Common myeloid progenitor, CD34-positive (primary cell): ENCODE measurements at regions of chr19 and their contacts with region 1.

Region 1: DNA sequence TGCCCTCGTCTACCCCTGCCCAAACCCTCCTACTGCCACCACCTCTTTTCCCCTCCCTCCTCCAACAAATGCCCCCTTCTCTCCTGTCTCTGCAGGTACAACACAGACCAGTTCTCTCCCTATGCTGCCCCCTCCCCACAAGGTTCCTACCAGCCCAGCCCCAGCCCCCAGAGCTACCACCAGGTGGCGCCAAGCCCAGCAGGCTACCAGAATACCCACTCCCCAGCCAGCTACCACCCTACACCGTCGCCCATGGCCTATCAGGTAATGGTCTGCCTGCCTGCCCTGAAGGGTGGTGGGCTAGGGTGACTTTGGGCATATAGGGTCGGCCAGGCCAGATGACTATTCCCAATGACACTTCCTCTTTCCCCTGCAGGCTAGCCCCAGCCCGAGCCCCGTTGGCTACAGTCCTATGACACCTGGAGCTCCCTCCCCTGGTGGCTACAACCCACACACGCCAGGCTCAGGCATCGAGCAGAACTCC is 6.5 kb upstream of the TIMM50 start:
- DNase-seq: peak; percentile 62 to 77 (median 72)
- H3K4me3 ChIP-seq: no peak overlapping the region
- H3K27ac ChIP-seq: no peak overlapping the region
- H3K4me1 ChIP-seq: no peaks in the 10 kb centered on the region
- H3K27me3 ChIP-seq: no peaks in the 10 kb centered on the region

Region 2: GRCh38 chr19:39246951-39247669 is 227.1 kb before region 1 on chr19:
- CTCF ChIA-PET with region 1: no interaction called
- POLR2A ChIA-PET with region 1: no interaction called
- DNase-seq: peak in 2 of 3 donors; percentile 56 to 67
- H3K4me3 ChIP-seq: peak overlapping the region in 2 of 7 experiments; percentile 16 to 48
- H3K27ac ChIP-seq: no peak overlapping the region
- H3K4me1 ChIP-seq: peaks cover 0 to 41% (median 25%) of the 10 kb centered on the region in 4 experiments
- H3K27me3 ChIP-seq: peaks cover 0 to 2% (median 0%) of the 10 kb centered on the region in 5 experiments

Region 3: DNA sequence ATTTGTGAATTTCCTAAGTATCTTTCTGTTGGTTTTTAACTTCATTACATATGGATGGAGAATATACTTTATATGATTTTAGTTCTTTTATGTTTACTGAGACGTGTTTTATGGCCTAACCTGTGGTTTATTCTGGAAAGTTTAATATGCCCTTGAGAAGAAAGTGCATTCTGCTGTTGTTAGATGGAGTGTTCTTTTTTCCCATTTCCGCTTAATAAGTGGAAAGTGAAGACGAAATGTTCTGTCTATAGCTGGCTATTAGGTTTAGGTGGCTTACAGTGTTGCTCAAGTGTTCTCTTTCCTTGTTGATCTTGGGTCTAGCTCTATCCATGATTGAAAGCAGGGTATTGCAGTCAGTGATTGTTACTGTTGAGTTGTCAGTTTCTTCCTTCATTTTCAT is 10.8 kb before region 1 on chr19:
- CTCF ChIA-PET with region 1: interaction called, 15 read pairs
- POLR2A ChIA-PET with region 1: no interaction called
- DNase-seq: no peak
- H3K4me3 ChIP-seq: no peak overlapping the region
- H3K27ac ChIP-seq: no peak overlapping the region
- H3K4me1 ChIP-seq: no peaks in the 10 kb centered on the region
- H3K27me3 ChIP-seq: no peaks in the 10 kb centered on the region

Region 4: DNA sequence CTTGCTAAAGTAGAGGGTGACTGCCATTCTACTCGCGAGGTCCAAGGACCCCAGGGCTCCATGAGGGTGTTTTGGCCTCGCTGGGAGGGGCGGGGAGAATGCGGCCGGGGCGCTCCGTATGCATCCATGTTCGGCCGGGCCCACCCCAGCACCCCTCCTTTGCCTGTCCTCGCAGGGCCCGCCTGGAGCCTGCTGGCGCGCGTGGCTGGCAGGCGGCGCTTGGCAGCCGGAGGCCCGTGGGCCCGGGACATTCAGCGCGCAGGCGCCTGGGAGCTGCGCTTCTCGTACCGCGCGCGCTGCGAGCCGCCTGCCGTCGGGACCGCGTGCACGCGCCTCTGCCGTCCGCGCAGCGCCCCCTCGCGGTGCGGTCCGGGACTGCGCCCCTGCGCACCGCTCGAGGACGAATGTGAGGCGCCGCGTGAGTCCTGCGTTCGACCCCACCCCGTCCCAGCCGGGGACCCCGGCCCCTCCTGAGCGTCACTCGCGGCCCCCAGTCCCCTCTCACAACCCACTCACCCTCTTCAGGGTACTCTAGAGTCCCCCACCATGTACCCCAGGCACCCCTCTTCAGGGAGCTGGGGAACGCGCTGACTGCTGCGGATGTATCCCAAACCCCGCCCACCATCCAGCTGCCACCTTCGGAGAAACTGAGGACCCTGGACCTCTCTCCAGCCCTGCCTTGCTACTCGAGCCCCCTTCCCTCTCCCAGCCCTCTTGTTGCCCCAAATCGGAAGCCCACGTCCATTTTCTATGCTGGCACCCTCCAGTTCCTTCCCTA is 28.6 kb after region 1 on chr19:
- CTCF ChIA-PET with region 1: interaction called, 11 read pairs
- POLR2A ChIA-PET with region 1: no interaction called
- DNase-seq: peak; percentile 88 to 93 (median 93)
- H3K4me3 ChIP-seq: no peak overlapping the region
- H3K27ac ChIP-seq: no peak overlapping the region
- H3K4me1 ChIP-seq: peaks cover 0 to 31% (median 20%) of the 10 kb centered on the region in 4 experiments
- H3K27me3 ChIP-seq: peaks cover 4 to 96% (median 31%) of the 10 kb centered on the region in 5 experiments

Region 5: DNA sequence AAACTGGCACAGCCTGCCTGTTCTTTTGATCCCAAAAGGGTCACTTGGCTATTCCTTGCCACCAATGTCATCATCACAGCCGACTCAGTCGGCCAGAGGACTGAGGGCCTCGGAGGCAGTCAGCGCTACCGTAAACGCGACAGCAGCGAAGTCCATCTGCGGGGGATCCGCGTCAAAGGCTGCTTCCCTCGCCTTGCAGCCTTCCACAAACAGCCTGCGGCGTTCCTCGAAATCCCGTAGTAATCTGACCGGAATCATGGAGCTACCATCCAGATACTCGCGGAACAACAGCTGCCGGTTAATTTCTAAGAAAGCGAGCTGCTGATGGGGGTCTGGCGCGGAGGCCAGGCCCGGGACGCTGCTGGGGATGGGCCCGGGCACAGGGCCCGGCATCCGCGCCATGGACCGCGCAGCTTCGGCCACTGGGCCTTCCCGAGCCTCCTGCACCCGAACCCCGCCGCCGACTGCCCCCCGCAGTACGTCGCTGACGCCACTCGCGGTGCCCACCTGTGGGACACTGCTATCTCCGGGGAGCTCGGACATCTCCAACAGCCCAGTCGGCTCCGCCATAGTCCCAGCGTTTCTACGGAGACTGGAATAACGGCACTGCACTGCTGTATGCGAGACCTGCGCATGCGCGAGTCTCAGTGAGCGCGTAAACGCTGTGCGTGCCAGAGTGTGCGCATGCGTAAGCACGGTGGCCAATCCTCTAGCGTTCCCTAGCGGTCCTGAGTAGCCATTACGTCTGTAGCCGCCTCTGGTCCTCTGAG is 58.2 kb after region 1 on chr19 and contains the start of gene EID2B:
- CTCF ChIA-PET with region 1: interaction called, 46 read pairs
- POLR2A ChIA-PET with region 1: interaction called, 7 read pairs
- DNase-seq: peak; percentile 94 to 98 (median 95)
- H3K4me3 ChIP-seq: peak within 1 kb of the TSS; percentile 71 to 95 (median 87)
- H3K27ac ChIP-seq: peak within 1 kb of the TSS; percentile 70 to 85
- H3K4me1 ChIP-seq: peaks cover 3 to 11% (median 8%) of the 10 kb centered on the region in 4 experiments
- H3K27me3 ChIP-seq: no peaks in the 10 kb centered on the region